Activated naive CD4-positive, alpha-beta T cell treated with anti-CD3 and anti-CD28 coated beads, Interleukin-2, amount 10 ng/mL, durations not matched to agents 7 days and 5 days (primary cell): ENCODE measurements at regions of chr12 and their contacts with region 1.

Region 1: GRCh38 chr12:6778574-6779550 is 6.5 kb downstream of the LAG3 start:
- DNase-seq: peak; percentile 94
- H3K4me3 Mint-ChIP-seq: peak overlapping the region; percentile 75
- H3K27ac Mint-ChIP-seq: peak overlapping the region; percentile 56
- H3K4me1 Mint-ChIP-seq: peaks cover 69% of the 10 kb centered on the region
- H3K27me3 Mint-ChIP-seq: peaks cover 51% of the 10 kb centered on the region

Region 2: DNA sequence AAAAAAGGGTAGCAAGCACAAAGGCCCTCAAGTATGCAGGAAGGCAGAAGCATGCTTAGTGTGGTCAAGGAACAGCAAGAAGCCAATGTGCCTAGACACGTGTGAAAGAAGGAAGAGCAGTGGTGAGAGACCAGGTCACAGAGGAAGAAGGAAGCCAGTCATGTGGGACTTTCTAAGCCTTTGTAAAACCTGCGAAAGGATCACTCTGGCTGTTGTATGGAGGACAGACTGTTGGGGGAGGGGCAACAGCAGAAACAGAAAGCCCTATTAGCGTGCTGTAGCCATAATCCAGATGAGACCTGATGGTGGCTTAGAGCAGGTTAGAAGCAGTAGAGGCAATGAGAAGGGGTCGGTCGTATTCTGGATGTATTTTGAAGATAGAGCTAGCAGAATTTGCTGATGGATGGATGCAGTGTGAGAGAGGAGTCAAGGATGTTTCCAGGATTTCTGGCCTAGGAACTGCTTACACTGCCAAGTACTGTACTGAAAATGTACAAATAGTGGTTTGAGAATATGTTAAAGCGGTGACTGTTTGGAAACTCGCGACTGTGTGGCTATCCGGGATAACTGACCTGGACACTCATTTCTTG is 20.3 kb before region 1 on chr12:
- CTCF ChIA-PET with region 1: interaction called, 37 read pairs
- DNase-seq: no peak
- H3K4me3 Mint-ChIP-seq: no peak overlapping the region
- H3K27ac Mint-ChIP-seq: peak overlapping the region; percentile 13
- H3K4me1 Mint-ChIP-seq: peaks cover 23% of the 10 kb centered on the region
- H3K27me3 Mint-ChIP-seq: peaks cover 65% of the 10 kb centered on the region

Region 3: GRCh38 chr12:6764011-6764828 is 14.6 kb before region 1 on chr12:
- CTCF ChIA-PET with region 1: interaction called, 63 read pairs
- DNase-seq: peak; percentile 64
- H3K4me3 Mint-ChIP-seq: peak overlapping the region; percentile 19
- H3K27ac Mint-ChIP-seq: no peak overlapping the region
- H3K4me1 Mint-ChIP-seq: peaks cover 39% of the 10 kb centered on the region
- H3K27me3 Mint-ChIP-seq: peaks cover 88% of the 10 kb centered on the region

Region 4: GRCh38 chr12:6792522-6793201 is 13.8 kb after region 1 on chr12:
- CTCF ChIA-PET with region 1: interaction called, 36 read pairs
- DNase-seq: peak; percentile 78
- H3K4me3 Mint-ChIP-seq: peak overlapping the region; percentile 84
- H3K27ac Mint-ChIP-seq: peak overlapping the region; percentile 92
- H3K4me1 Mint-ChIP-seq: peaks cover 64% of the 10 kb centered on the region
- H3K27me3 Mint-ChIP-seq: no peaks in the 10 kb centered on the region